Adrenal gland (tissue), 19 donors: ENCODE measurements at regions of chr2 and their contacts with region 1.

Region 1: DNA sequence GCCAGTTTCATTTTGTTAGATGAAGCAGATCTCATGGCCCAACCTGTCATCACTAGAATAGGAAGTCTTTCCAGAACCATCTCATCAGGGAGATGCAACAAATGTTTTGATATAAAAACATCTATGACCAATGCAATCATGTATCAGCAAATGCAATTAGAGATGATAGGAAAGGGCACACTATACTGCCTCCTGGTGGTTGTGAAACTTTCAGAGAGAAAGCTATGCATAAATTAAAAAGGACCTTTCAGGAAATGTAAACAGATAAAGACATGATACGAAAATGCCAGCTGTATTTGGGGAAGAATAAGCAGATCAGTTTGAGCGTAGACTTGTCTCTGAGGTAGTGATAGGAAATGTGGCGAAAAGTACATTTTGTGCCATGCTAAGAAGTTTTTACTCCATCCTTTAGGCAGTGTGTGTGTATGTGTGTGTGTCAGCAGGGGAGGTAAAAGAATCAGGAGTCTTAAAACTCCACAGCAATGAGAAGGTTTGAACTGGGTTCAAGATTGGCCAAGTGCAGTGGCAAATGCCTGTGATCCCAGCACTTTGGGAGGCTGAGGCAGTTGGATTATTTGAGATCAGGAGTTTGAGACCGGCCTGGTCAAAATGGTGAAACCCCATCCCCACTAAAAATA is 479.3 kb downstream of the CPS1 start:
- DNase-seq: peak in 4 of 7 donors; percentile 18 to 36 (median 24)
- H3K4me3 ChIP-seq: no peak overlapping the region
- H3K27ac ChIP-seq: no peak overlapping the region
- H3K4me1 ChIP-seq: no peaks in the 10 kb centered on the region
- H3K27me3 ChIP-seq: no peaks in the 10 kb centered on the region
- CTCF ChIP-seq: peak; percentile 49 to 60 (median 56)
- POLR2A ChIP-seq: no peak

Region 2: GRCh38 chr2:210215120-210215519 is 820.5 kb before region 1 on chr2:
- intact Hi-C with region 1: no loop called
- DNase-seq: no peak
- H3K4me3 ChIP-seq: no peak overlapping the region
- H3K27ac ChIP-seq: no peak overlapping the region
- H3K4me1 ChIP-seq: no peaks in the 10 kb centered on the region
- H3K27me3 ChIP-seq: no peaks in the 10 kb centered on the region
- CTCF ChIP-seq: no peak
- POLR2A ChIP-seq: no peak

Region 3: GRCh38 chr2:210617732-210618330 is 417.8 kb before region 1 on chr2:
- intact Hi-C with region 1: loop called in 1 of 2 experiments (anchors 10 kb)
- DNase-seq: peak in 4 of 7 donors; percentile 7 to 31 (median 18)
- H3K4me3 ChIP-seq: no peak overlapping the region
- H3K27ac ChIP-seq: no peak overlapping the region
- H3K4me1 ChIP-seq: no peaks in the 10 kb centered on the region
- H3K27me3 ChIP-seq: no peaks in the 10 kb centered on the region
- CTCF ChIP-seq: peak; percentile 17 to 57 (median 40)
- POLR2A ChIP-seq: no peak